ENCODE measurements at regions of chr3 and their contacts with region 1.

Region 1: GRCh38 chr3:94234177-94234788 is 171.4 kb downstream of the NSUN3 start:
- DNase-seq: peak; percentile 55
- H3K4me3 Mint-ChIP-seq: no peak overlapping the region
- H3K27ac Mint-ChIP-seq: no peak overlapping the region
- H3K4me1 Mint-ChIP-seq: no peaks in the 10 kb centered on the region
- H3K27me3 Mint-ChIP-seq: no peaks in the 10 kb centered on the region
- CTCF ChIP-seq: peak; percentile 45

Region 2: GRCh38 chr3:94115482-94115881 is 118.8 kb before region 1 on chr3:
- CTCF ChIA-PET with region 1: interaction called, 6 read pairs
- POLR2A ChIA-PET with region 1: no interaction called
- intact Hi-C with region 1: loop called (anchors 5 kb)
- DNase-seq: peak; percentile 44
- H3K4me3 Mint-ChIP-seq: no peak overlapping the region
- H3K27ac Mint-ChIP-seq: no peak overlapping the region
- H3K4me1 Mint-ChIP-seq: no peaks in the 10 kb centered on the region
- H3K27me3 Mint-ChIP-seq: no peaks in the 10 kb centered on the region
- CTCF ChIP-seq: peak; percentile 54

Region 3: GRCh38 chr3:94221829-94222228 is 12.5 kb before region 1 on chr3:
- CTCF ChIA-PET with region 1: interaction called, 17 read pairs
- POLR2A ChIA-PET with region 1: no interaction called
- intact Hi-C with region 1: no loop called
- DNase-seq: no peak
- H3K4me3 Mint-ChIP-seq: no peak overlapping the region
- H3K27ac Mint-ChIP-seq: no peak overlapping the region
- H3K4me1 Mint-ChIP-seq: peaks cover 11% of the 10 kb centered on the region
- H3K27me3 Mint-ChIP-seq: no peaks in the 10 kb centered on the region
- CTCF ChIP-seq: no peak

Region 4: DNA sequence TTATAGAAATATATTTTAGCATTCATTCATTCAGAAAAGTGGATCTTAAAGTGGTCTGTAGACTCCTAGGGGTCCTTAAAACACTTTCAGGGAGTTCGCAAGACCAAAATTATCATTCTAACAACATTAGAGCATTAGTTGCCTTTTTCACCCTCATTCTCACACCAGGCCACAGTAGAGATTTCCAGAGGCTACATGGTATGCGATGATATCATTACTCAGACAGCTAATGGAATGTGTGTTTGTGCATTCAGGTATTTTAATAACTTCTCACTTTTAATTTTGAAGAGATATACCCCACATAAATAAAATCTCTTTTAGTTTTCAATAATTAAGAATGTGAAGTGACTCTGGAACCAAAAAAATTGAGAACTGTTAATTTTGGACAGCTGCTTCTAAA is 35.5 kb after region 1 on chr3:
- CTCF ChIA-PET with region 1: interaction called, 12 read pairs
- POLR2A ChIA-PET with region 1: no interaction called
- intact Hi-C with region 1: no loop called
- DNase-seq: no peak
- H3K4me3 Mint-ChIP-seq: no peak overlapping the region
- H3K27ac Mint-ChIP-seq: no peak overlapping the region
- H3K4me1 Mint-ChIP-seq: no peaks in the 10 kb centered on the region
- H3K27me3 Mint-ChIP-seq: peaks cover 15% of the 10 kb centered on the region
- CTCF ChIP-seq: no peak

Region 5: GRCh38 chr3:94285870-94286269 is 51.6 kb after region 1 on chr3:
- CTCF ChIA-PET with region 1: interaction called, 11 read pairs
- POLR2A ChIA-PET with region 1: no interaction called
- intact Hi-C with region 1: no loop called
- DNase-seq: peak; percentile 42
- H3K4me3 Mint-ChIP-seq: no peak overlapping the region
- H3K27ac Mint-ChIP-seq: no peak overlapping the region
- H3K4me1 Mint-ChIP-seq: no peaks in the 10 kb centered on the region
- H3K27me3 Mint-ChIP-seq: no peaks in the 10 kb centered on the region
- CTCF ChIP-seq: peak; percentile 42

Region 6: DNA sequence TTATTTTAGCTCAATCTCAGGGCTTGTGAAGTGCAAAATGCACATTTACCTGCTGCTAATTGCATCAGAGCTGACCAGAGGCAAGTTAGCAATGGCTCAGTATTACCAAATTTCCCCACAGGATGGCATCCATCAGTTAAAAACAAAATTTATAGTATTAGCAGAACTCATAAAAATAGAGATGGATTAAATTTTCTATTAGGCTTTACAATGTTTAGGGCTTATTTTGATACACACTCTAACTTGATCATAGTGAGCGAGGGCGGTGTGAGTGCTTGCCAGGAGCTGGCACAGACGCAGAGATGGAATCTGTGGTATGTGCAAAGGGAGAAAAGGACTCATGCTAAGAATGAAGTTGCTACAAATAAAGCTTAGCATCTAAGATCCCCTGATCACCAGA is 69.6 kb after region 1 on chr3:
- CTCF ChIA-PET with region 1: interaction called, 10 read pairs
- POLR2A ChIA-PET with region 1: no interaction called
- intact Hi-C with region 1: no loop called
- DNase-seq: peak; percentile 15
- H3K4me3 Mint-ChIP-seq: no peak overlapping the region
- H3K27ac Mint-ChIP-seq: no peak overlapping the region
- H3K4me1 Mint-ChIP-seq: no peaks in the 10 kb centered on the region
- H3K27me3 Mint-ChIP-seq: no peaks in the 10 kb centered on the region
- CTCF ChIP-seq: no peak

Measured in MCF 10A (cell line).